Calu3 (cell line): ENCODE measurements at regions of chr10 and their contacts with region 1.

Region 1: GRCh38 chr10:89278034-89278535 is 23.8 kb upstream of the IFIT2 start:
- DNase-seq: peak; percentile 71
- H3K4me3 Mint-ChIP-seq: peak overlapping the region; percentile 54
- H3K27ac Mint-ChIP-seq: peak overlapping the region; percentile 97
- H3K4me1 Mint-ChIP-seq: peaks cover 70% of the 10 kb centered on the region
- H3K27me3 Mint-ChIP-seq: no peaks in the 10 kb centered on the region
- CTCF ChIP-seq: no peak

Region 2: DNA sequence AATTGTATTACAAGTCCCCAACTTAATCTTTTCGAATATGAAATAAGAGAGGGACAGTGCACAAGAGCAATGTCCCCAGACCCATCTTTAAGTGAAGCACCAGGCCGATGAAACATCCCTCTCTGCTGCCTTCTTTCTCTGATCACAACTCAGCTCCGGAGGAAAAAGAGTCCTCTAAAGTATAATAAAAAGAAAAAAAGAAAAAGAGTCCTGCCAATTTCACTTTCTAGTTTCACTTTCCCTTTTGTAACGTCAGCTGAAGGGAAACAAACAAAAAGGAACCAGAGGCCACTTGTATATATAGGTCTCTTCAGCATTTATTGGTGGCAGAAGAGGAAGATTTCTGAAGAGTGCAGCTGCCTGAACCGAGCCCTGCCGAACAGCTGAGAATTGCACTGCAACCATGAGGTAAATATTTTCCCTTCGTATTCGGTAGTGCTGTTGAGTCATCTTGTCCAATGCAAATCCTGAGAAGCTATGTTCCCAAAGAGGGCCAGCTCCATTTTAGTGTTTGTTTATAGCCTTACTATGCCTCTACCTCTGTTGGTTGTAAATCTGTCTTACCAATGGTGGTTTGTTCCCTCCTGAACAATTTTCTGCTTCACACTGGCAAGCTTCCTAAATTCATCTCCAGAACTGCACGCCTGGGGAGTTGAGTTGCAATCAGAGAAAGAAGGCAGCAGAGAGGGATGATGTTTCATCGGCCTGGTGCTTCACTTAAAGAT is 23.8 kb after region 1 on chr10 and contains the start of gene IFIT2:
- CTCF ChIA-PET with region 1: no interaction called
- intact Hi-C with region 1: loop called (anchors 2 kb)
- DNase-seq: no peak
- H3K4me3 Mint-ChIP-seq: peak within 1 kb of the TSS; percentile 63
- H3K27ac Mint-ChIP-seq: peak within 1 kb of the TSS; percentile 22
- H3K4me1 Mint-ChIP-seq: peaks cover 36% of the 10 kb centered on the region
- H3K27me3 Mint-ChIP-seq: no peaks in the 10 kb centered on the region
- CTCF ChIP-seq: no peak
- total RNA-seq, gene IFIT2: 40.8 and 139 TPM in 2 replicates

Region 3: DNA sequence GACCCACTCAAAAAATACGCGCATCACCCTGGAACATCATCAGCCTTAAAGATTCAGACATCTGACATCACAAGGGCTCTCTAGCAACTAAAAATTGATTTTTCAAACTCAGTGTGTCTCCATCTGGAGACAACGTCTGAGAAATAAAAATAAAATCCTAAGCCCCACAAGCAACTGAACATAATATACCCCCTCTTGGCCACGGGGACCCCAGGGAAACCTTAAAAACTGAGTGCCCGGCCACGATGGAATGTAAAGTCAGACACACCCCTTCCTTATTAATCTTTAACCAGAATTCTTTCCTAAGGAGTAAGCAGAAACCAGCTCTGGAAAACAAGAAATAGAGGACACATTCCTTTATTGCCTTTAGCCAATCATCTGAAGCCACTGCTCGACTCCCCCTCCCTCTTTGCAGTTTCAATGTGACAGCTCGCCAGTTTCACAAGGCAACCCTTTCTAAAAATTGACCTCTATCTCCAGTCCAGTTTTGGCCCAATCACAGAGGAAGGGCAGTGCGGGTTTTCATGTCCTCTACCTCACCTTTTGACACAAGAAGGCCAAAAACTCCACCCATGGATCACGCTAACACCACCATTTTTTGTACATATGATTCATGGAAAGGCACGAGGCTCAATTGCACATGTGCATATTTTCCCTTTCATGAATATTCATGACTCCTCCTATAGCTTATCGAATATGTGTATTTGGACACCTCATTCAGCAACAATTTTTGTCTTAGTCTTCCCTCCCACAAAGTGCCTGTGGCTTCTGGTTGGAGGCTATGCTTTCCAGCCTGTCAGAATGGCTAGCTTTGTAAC is 73.9 kb after region 1 on chr10:
- CTCF ChIA-PET with region 1: interaction called, 13 read pairs
- intact Hi-C with region 1: loop called (anchors 2 kb)
- DNase-seq: peak; percentile 69
- H3K4me3 Mint-ChIP-seq: peak overlapping the region; percentile 66
- H3K27ac Mint-ChIP-seq: peak overlapping the region; percentile 99
- H3K4me1 Mint-ChIP-seq: peaks cover 50% of the 10 kb centered on the region
- H3K27me3 Mint-ChIP-seq: no peaks in the 10 kb centered on the region
- CTCF ChIP-seq: no peak